Dendritic cell treated with granulocyte-macrophage colony-stimulating factor and Interleukin-4, amounts not matched to agents 40 ng/mL and 50 ng/mL, for 4 days (primary cell): ENCODE measurements at regions of chr5 and their contacts with region 1.

Region 1: DNA sequence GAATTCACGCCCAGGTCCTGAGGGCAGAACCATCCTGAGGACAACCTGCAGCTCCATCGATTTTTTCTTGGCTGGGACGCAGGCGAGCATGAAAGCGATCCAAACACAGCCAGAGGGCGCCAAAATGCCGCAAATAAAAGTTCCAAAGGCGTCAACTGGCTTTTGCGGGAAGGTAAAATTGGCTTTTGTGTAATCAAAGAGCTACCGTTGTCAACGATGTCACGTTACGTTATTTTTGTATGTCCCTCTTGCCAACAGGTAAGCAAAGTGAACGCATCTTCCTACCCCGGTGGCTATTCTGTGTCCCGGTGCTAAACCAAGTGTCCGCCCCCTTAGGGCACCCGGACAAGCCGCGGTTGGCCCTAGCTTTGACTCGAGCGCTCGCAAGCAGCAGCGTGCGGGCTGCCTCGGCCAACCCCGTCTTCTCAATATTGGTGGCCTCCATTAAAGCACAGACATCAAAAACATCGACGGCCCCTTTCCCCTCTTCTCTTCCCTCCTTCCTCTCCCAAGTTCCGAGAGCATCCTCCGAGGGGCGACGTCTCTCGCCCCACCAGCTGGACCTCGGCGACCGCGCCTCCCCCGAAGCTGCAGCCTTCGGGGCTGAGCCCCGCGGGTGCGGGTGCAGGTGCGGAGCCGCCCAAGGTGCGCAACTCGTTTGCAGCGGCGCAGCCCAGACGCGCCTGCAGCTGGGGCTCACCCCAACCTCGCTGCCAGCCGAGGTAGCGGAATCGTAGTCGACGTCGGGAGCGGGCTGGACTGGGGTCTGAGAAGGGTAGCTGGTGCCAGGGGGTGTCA is 1.1 kb upstream of the BASP1 start:
- H3K4me3 Mint-ChIP-seq: peak overlapping the region; percentile 77
- H3K27ac Mint-ChIP-seq: no peak overlapping the region
- H3K4me1 Mint-ChIP-seq: peaks cover 24% of the 10 kb centered on the region
- H3K27me3 Mint-ChIP-seq: peaks cover 17% of the 10 kb centered on the region

Region 2: GRCh38 chr5:17910318-17910717 is 693.9 kb after region 1 on chr5:
- intact Hi-C with region 1: loop called (anchors 10 kb)
- H3K4me3 Mint-ChIP-seq: no peak overlapping the region
- H3K27ac Mint-ChIP-seq: no peak overlapping the region
- H3K4me1 Mint-ChIP-seq: no peaks in the 10 kb centered on the region
- H3K27me3 Mint-ChIP-seq: peaks cover 15% of the 10 kb centered on the region

Region 3: GRCh38 chr5:18281682-18282557 is 1065.5 kb after region 1 on chr5:
- intact Hi-C with region 1: loop called (anchors 1 kb)
- H3K4me3 Mint-ChIP-seq: no peak overlapping the region
- H3K27ac Mint-ChIP-seq: no peak overlapping the region
- H3K4me1 Mint-ChIP-seq: peaks cover 4% of the 10 kb centered on the region
- H3K27me3 Mint-ChIP-seq: no peaks in the 10 kb centered on the region

Region 4: GRCh38 chr5:18305297-18305924 is 1089.0 kb after region 1 on chr5:
- intact Hi-C with region 1: loop called (anchors 1 kb)
- H3K4me3 Mint-ChIP-seq: no peak overlapping the region
- H3K27ac Mint-ChIP-seq: no peak overlapping the region
- H3K4me1 Mint-ChIP-seq: peaks cover 7% of the 10 kb centered on the region
- H3K27me3 Mint-ChIP-seq: peaks cover 2% of the 10 kb centered on the region